Activated CD4-positive, alpha-beta memory T cell treated with anti-CD3 and anti-CD28 coated beads for 36 hours (primary cell): ENCODE measurements at regions of chr20 and their contacts with region 1.

Region 1: DNA sequence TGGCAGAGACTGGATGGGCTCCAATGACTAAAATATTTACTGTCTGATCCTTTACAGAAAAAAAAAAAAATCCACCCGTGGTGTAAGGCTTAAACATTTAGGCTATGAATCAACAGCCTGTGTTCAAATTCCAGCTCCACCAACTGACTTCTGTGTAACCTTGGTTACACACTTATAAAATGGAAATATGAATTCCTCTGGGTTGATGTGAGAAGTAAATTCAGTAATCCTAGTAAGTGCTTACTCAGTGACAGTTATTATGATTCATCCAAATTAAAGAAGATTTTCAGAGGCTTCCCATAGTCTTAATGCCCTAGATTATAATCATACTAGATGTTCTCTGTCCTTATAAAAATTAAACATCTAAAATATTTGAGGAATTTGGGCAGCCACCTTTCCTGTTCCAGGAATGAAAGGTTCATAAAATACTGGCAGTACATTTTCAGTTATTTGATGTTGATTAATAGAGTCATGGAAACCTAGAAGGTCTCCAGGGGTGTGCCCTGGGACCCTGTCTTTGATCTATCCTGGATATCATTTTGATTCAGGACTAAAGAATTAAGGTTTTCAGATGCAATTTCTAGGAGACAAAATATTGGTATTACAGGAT is 180.3 kb upstream of the ZNF217 start:
- DNase-seq: no peak
- H3K4me3 Mint-ChIP-seq: no peak overlapping the region
- H3K27ac Mint-ChIP-seq: no peak overlapping the region
- H3K4me1 Mint-ChIP-seq: peaks cover 13% of the 10 kb centered on the region
- H3K27me3 Mint-ChIP-seq: no peaks in the 10 kb centered on the region

Region 2: GRCh38 chr20:53493311-53493864 is 280.5 kb before region 1 on chr20:
- CTCF ChIA-PET with region 1: no interaction called
- POLR2A ChIA-PET with region 1: no interaction called
- intact Hi-C with region 1: no loop called
- DNase-seq: no peak
- H3K4me3 Mint-ChIP-seq: no peak overlapping the region
- H3K27ac Mint-ChIP-seq: no peak overlapping the region
- H3K4me1 Mint-ChIP-seq: peaks cover 23% of the 10 kb centered on the region
- H3K27me3 Mint-ChIP-seq: peaks cover 8% of the 10 kb centered on the region

Region 3: GRCh38 chr20:53750827-53751619 is 22.9 kb before region 1 on chr20:
- CTCF ChIA-PET with region 1: no interaction called
- POLR2A ChIA-PET with region 1: no interaction called
- intact Hi-C with region 1: loop called (anchors 2 kb)
- DNase-seq: peak; percentile 53
- H3K4me3 Mint-ChIP-seq: peak overlapping the region; percentile 45
- H3K27ac Mint-ChIP-seq: peak overlapping the region; percentile 95
- H3K4me1 Mint-ChIP-seq: peaks cover 60% of the 10 kb centered on the region
- H3K27me3 Mint-ChIP-seq: no peaks in the 10 kb centered on the region